ENCODE measurements at regions of chr1 and their contacts with region 1.

Region 1: DNA sequence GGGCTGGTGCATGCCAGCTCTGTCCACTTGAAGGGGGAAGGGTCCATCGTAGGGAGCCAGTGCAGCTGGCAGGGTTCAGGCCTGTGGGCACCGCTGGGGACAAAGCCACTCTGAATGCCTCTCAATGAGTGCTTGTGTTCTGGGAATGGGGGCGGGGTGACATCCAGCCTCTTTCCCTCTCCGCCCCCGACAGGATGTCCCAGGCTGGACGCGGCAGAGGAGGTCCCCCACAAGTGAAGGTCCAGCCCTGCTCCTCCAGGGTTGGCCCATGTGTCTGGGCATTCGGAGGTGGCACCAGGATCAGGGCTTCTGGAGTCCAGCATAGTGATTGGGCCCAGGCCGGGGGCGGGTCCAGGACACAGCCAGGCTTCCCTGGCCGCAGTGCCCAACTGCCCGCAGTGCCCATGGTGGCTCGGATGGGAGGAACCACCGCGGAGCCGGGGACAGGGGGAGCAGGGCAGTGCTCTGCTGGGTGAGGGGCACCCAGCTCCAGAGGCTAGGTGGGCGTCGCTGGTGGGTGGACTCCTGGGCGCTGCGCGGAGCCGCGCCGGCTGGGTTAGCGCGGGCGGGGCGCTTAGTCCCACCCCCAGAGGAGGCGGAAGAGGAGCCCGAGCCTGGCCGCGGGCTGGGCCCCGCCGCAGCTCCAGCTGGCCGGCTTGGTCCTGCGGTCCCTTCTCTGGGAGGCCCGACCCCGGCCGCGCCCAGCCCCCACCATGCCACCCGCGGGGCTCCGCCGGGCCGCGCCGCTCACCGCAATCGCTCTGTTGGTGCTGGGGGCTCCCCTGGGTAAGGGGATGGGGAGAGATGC is at the start of gene SHISA4:
- DNase-seq: peak; percentile 33 to 40 (median 38)
- H3K4me3 ChIP-seq: peak within 1 kb of the TSS; percentile 48 to 74 (median 49)
- H3K4me3 Mint-ChIP-seq: peak within 1 kb of the TSS; percentile 79 to 90
- H3K27ac ChIP-seq: no peak within 1 kb of the TSS
- H3K27ac Mint-ChIP-seq: peak within 1 kb of the TSS in 2 of 7 donors; percentile 13 to 68
- H3K4me1 ChIP-seq: peaks cover 20 to 23% of the 10 kb centered on the region in 2 donors
- H3K4me1 Mint-ChIP-seq: peaks cover 22% of the 10 kb centered on the region
- H3K27me3 ChIP-seq: peaks cover 19 to 51% of the 10 kb centered on the region in 2 donors
- H3K27me3 Mint-ChIP-seq: peaks cover 43 to 60% (median 53%) of the 10 kb centered on the region in 3 donors
- CTCF ChIP-seq: no peak
- polyA plus RNA-seq, gene SHISA4: 1.5 to 3.1 (median 2.3) TPM

Region 2: DNA sequence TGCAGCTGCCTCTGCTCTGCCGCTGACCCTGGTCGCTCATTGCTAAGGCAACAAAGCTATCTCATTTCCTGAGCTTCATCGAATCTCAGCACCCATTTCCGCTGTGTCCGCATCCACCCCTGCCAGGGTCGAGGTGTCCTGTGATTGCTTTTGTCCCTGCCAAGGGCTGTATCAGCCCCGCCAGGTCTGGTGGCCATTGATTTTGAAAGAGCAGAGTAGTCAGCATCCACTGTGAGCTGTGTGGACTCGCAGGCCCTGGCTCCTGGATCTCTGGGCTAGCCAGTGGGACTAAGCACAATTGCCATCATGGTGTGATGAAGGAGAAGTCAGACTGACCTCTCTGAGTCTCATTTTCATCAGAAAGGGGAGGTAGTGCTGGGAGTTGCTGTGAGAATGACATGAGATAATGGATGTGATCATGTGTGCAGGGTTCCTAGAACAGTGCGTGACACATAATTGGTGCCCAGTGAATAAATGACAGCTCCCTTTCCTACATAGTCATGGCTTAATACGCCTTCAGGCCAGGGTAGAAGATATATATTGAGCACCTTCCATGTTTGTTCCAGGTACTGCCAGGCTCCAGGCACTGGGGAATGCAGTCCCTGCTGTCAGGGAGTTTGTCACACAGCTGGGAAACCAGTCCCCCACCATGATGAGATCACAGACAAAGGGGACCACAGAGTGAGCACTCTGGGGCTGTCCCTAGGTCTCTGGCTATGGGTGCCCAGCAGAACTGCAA is 317.4 kb before region 1 on chr1:
- intact Hi-C with region 1: no loop called
- DNase-seq: no peak
- H3K4me3 ChIP-seq: no peak overlapping the region
- H3K4me3 Mint-ChIP-seq: peak overlapping the region in 1 of 2 donors; percentile 0
- H3K27ac ChIP-seq: no peak overlapping the region
- H3K27ac Mint-ChIP-seq: peak overlapping the region in 3 of 7 donors; percentile 49 to 94 (median 86)
- H3K4me1 ChIP-seq: peaks cover 6% of the 10 kb centered on the region in 2 donors
- H3K4me1 Mint-ChIP-seq: peaks cover 26% of the 10 kb centered on the region
- H3K27me3 ChIP-seq: no peaks in the 10 kb centered on the region
- H3K27me3 Mint-ChIP-seq: peaks cover 0 to 5% (median 2%) of the 10 kb centered on the region in 3 donors
- CTCF ChIP-seq: no peak

Region 3: DNA sequence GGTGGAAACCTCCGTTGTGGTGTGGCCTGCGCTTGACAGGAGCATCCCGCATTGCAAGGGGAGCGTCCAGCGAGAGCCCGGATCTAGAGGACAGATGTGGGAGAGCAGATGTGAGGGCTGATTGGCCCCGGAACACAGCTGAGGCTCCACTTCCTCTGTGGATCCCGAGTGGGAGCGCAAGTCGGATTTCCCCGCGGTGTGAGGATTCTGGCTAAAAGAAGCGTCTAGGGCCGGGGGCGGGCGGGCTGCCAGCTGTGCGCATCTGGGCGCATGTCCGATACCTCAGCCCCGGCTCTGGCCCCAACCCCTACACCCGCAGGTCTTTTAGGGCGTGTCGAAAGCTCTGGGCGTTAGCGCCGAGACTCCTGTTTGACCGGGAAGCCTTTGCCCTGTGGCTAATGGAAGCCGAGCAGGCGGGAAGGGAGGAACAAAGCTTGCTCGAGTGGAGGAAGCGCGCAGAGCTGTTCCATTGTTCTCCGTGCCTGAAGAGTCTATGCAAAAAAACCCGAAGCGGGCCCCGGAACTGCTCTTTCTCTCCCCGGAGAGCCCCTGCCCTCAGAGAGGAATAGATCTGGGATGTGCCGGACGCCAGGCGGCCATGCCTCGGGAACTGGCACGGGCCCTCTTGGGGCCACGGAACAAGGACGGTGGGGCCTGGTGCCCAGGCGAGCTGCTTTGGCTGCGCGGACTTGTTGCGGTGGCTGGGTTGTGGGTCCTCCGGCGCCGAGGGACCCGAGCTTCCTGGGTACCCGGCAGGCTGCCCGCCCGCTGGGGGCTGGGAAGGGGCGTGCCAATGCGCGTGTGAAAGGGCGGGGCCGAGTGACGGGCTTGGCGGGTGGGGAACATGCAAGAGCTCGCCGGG is 238.5 kb before region 1 on chr1:
- intact Hi-C with region 1: no loop called
- DNase-seq: no peak
- H3K4me3 ChIP-seq: peak overlapping the region; percentile 8 to 71 (median 20)
- H3K4me3 Mint-ChIP-seq: peak overlapping the region; percentile 77 to 88
- H3K27ac ChIP-seq: no peak overlapping the region
- H3K27ac Mint-ChIP-seq: no peak overlapping the region
- H3K4me1 ChIP-seq: peaks cover 19 to 27% of the 10 kb centered on the region in 2 donors
- H3K4me1 Mint-ChIP-seq: peaks cover 24% of the 10 kb centered on the region
- H3K27me3 ChIP-seq: peaks cover 2 to 39% of the 10 kb centered on the region in 2 donors
- H3K27me3 Mint-ChIP-seq: peaks cover 32 to 41% (median 38%) of the 10 kb centered on the region in 3 donors
- CTCF ChIP-seq: no peak

Region 4: DNA sequence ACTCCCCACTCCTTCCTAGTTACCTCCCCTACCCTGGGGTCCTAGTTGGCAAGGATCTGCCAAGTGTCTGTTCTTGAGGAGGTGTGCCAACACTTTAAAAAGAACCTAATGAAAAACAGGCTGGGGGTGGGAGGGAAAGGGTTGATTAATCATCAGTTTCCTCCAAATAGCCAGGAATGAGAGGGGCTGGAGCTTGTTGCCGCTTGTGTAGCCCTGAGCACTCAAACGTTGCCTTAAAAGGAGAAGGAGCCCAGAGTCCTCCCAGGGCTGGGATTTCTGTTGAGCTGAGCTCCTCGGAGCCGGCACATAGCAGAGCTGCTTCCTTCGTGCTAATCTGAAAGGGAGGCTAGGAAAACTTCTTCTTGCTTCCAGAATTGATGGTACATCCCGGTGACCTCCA is 16.1 kb after region 1 on chr1:
- intact Hi-C with region 1: no loop called
- DNase-seq: no peak
- H3K4me3 ChIP-seq: no peak overlapping the region
- H3K4me3 Mint-ChIP-seq: no peak overlapping the region
- H3K27ac ChIP-seq: no peak overlapping the region
- H3K27ac Mint-ChIP-seq: no peak overlapping the region
- H3K4me1 ChIP-seq: no peaks in the 10 kb centered on the region
- H3K4me1 Mint-ChIP-seq: no peaks in the 10 kb centered on the region
- H3K27me3 ChIP-seq: no peaks in the 10 kb centered on the region
- H3K27me3 Mint-ChIP-seq: peaks cover 3 to 5% (median 3%) of the 10 kb centered on the region in 3 donors
- CTCF ChIP-seq: no peak

Region 5: GRCh38 chr1:201964261-201964660 is 75.8 kb after region 1 on chr1:
- intact Hi-C with region 1: loop called in 1 of 2 experiments (anchors 5 kb)
- DNase-seq: no peak
- H3K4me3 ChIP-seq: no peak overlapping the region
- H3K4me3 Mint-ChIP-seq: no peak overlapping the region
- H3K27ac ChIP-seq: no peak overlapping the region
- H3K27ac Mint-ChIP-seq: no peak overlapping the region
- H3K4me1 ChIP-seq: no peaks in the 10 kb centered on the region
- H3K4me1 Mint-ChIP-seq: no peaks in the 10 kb centered on the region
- H3K27me3 ChIP-seq: no peaks in the 10 kb centered on the region
- H3K27me3 Mint-ChIP-seq: no peaks in the 10 kb centered on the region
- CTCF ChIP-seq: no peak

Region 6: DNA sequence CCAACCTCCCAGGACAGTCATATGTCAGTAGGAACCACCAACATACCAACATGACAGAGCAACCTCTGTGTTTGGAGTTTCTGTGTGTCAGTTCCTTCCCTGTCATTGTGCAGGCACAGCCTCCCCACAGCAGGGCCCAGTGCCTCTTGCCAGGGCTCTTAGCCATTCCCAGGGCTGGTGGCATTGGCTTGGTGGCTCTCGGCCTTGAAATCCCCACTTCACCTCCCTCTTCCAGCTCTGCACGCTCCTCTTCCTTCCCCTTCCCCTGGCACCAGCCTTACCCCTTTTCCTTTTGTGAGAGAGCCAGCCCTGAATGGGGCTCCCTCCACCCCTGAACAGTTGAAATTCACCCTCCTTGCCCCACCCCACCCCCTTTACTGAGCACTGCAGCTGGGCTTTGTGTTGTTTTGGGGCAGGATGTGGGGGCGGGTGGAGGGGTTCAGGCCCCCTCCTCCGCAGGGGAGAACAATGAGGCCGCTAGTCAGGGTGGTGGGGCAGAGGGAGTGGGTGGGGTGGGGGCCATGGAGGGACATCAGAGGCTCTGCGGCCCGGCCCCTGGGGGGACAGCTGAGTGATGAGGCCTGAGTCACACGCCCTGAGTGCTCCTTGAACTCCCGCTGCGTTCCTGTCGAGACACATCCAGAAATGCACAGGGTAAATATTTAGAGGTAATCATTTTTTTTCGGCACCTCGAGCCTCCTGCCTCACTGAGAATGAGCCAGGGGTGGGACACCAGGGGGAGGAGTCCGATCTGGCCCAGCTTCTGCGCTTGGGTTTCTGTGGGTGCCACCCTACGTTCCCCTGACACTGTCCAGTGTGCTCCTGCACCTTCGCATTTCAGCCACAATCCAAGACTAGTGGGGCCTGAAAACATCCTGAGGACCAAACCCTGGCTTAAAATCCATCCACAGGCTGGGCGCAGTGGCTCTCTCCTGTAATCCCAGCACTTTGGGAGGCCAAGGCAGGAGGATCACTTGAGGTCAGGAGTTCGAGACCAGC is 333.7 kb after region 1 on chr1:
- intact Hi-C with region 1: no loop called
- DNase-seq: no peak
- H3K4me3 ChIP-seq: no peak overlapping the region
- H3K4me3 Mint-ChIP-seq: no peak overlapping the region
- H3K27ac ChIP-seq: no peak overlapping the region
- H3K27ac Mint-ChIP-seq: no peak overlapping the region
- H3K4me1 ChIP-seq: no peaks in the 10 kb centered on the region
- H3K4me1 Mint-ChIP-seq: peaks cover 8% of the 10 kb centered on the region
- H3K27me3 ChIP-seq: no peaks in the 10 kb centered on the region
- H3K27me3 Mint-ChIP-seq: peaks cover 5 to 12% (median 12%) of the 10 kb centered on the region in 3 donors
- CTCF ChIP-seq: no peak

Measured in CD14-positive monocyte (primary cell).